Activated CD8-positive, alpha-beta T cell treated with anti-CD3 and anti-CD28 coated beads, Interleukin-2, amount 10 ng/mL, durations not matched to agents 7 days and 5 days (primary cell): ENCODE measurements at regions of chr1 and their contacts with region 1.

Region 1: GRCh38 chr1:152577168-152577567 is 3.1 kb downstream of the LCE3D start:
- DNase-seq: no peak
- ATAC-seq: no peak
- H3K4me3 Mint-ChIP-seq: no peak overlapping the region
- H3K27ac Mint-ChIP-seq: no peak overlapping the region
- H3K4me1 Mint-ChIP-seq: no peaks in the 10 kb centered on the region
- H3K27me3 Mint-ChIP-seq: peaks cover 8% of the 10 kb centered on the region

Region 2: DNA sequence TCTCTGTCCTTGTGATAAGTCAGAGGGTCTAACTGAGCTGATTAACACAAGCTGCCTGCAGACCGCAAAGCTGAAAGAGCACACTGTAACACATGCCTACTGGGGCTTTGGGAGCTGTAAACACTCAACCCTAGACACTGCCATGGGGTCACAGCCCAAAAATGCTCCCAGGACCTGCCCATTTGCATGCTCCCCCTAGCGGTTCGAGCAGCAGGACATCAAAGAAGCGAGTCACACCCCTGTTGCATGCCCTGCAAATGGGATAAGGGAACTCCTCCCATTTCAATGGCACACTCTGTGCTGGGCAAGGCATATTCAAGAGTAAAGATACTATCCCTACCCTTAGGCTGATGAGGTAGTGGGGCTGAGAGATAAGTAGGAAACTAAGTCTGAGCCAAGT is 33.3 kb before region 1 on chr1:
- CTCF ChIA-PET with region 1: no interaction called
- POLR2A ChIA-PET with region 1: no interaction called
- DNase-seq: no peak
- ATAC-seq: no peak
- H3K4me3 Mint-ChIP-seq: no peak overlapping the region
- H3K27ac Mint-ChIP-seq: no peak overlapping the region
- H3K4me1 Mint-ChIP-seq: no peaks in the 10 kb centered on the region
- H3K27me3 Mint-ChIP-seq: no peaks in the 10 kb centered on the region

Region 3: DNA sequence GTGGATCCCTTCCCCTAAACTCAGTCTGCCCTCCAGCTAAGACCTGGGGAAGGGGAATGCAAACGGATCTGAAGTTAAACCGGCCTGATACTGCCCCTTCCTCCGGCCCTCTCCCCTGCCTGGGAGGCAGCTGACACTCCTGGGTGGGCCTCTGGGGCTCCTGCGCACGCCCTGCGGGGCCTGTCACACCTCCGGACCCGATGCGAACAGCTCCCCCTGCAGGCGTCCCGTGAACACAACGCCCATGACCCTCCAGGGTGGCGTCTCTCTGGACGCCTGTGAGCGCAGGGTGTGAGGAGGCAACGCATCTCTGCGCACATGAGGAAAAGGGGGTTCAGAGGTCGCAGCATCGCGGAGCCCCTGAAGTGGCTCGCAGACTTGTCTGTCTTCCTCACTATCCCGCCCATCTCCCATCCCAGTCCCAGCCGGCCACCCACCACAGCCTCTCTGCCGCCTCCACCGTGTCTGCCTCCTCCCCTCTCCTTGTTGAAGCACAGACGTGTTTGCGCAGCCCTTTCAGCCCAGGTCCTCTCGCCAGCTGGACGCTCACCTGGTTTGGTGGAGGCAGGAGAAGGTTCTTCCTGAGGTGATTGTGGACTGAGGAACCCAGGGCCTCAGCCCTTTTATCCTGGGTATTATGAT is 46.2 kb after region 1 on chr1:
- CTCF ChIA-PET with region 1: interaction called, 12 read pairs
- POLR2A ChIA-PET with region 1: interaction called, 3 read pairs
- DNase-seq: peak; percentile 25
- ATAC-seq: peak; percentile 44
- H3K4me3 Mint-ChIP-seq: no peak overlapping the region
- H3K27ac Mint-ChIP-seq: no peak overlapping the region
- H3K4me1 Mint-ChIP-seq: peaks cover 15% of the 10 kb centered on the region
- H3K27me3 Mint-ChIP-seq: peaks cover 2% of the 10 kb centered on the region

Region 4: GRCh38 chr1:152707860-152708259 is 130.7 kb after region 1 on chr1 and contains the start of gene LCE4A:
- CTCF ChIA-PET with region 1: no interaction called
- POLR2A ChIA-PET with region 1: no interaction called
- DNase-seq: no peak
- ATAC-seq: no peak
- H3K4me3 Mint-ChIP-seq: no peak within 1 kb of the TSS
- H3K27ac Mint-ChIP-seq: no peak within 1 kb of the TSS
- H3K4me1 Mint-ChIP-seq: no peaks in the 10 kb centered on the region
- H3K27me3 Mint-ChIP-seq: peaks cover 13% of the 10 kb centered on the region
- total RNA-seq, gene LCE4A: not detected

Region 5: DNA sequence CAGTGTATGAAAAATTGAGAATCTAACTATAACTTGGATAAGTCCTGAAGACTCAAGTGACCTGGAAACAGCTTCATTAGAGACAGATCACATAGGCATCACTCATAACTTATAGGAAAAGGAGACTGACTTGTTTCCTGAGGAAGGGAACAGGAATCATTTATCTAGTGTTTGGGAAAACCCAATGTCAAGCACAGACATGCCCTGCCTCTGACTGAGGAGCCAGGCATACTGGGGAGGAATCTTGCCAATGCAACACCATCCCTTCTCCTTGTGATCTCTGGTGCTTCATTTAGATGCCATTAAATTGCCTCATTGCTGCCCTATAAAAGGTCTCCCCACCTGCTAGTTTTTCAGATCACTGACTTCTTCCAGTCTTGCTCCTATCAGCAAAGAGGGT is 141.1 kb after region 1 on chr1:
- CTCF ChIA-PET with region 1: no interaction called
- POLR2A ChIA-PET with region 1: no interaction called
- DNase-seq: no peak
- ATAC-seq: no peak
- H3K4me3 Mint-ChIP-seq: no peak overlapping the region
- H3K27ac Mint-ChIP-seq: no peak overlapping the region
- H3K4me1 Mint-ChIP-seq: no peaks in the 10 kb centered on the region
- H3K27me3 Mint-ChIP-seq: peaks cover 5% of the 10 kb centered on the region